Mammary epithelial cell (primary cell): ENCODE measurements at regions of chr13 and their contacts with region 1.

Region 1: GRCh38 chr13:76687467-76687866 is 198.7 kb downstream of the KCTD12 start:
- DNase-seq: no peak
- H3K4me3 ChIP-seq: no peak overlapping the region
- H3K27ac ChIP-seq: no peak overlapping the region
- H3K4me1 ChIP-seq: no peaks in the 10 kb centered on the region
- H3K27me3 ChIP-seq: no peaks in the 10 kb centered on the region
- CTCF ChIP-seq: no peak

Region 2: DNA sequence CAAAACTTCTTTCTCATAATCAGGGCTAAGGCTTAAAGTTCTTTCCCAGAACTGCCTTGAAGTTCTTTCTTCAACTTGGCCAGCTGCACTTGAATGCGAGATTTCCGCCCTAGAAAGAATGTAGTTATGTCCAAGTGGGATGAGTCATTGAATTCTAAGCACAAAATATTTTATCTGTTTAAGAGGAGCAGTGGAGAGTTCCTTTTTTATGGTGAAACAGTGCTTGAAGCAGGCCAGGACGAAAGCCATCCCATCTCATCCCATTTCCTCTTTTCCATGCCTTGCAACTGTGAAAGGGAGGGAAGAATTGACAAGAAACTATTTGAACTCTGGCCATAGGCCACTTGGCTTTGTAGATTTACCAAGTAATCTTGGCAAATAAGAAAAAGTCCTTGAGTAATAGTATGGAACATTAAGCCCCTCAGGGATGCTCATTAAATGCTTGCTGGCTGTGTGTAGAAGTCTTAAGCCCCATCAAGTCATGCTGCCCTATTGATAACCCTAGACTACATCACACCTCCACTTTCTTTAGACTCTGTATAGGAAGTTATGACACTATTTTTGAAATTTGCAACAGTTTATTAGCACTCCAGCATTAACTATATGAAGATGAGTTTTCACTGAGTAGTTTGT is 24.2 kb after region 1 on chr13:
- CTCF ChIA-PET with region 1: no interaction called
- dilution Hi-C with region 1: no loop called
- in situ Hi-C with region 1: no loop called
- intact Hi-C with region 1: loop called (anchors 1 kb)
- DNase-seq: peak; percentile 47
- H3K4me3 ChIP-seq: no peak overlapping the region
- H3K27ac ChIP-seq: no peak overlapping the region
- H3K4me1 ChIP-seq: peaks cover 8% of the 10 kb centered on the region
- H3K27me3 ChIP-seq: no peaks in the 10 kb centered on the region
- CTCF ChIP-seq: no peak

Region 3: DNA sequence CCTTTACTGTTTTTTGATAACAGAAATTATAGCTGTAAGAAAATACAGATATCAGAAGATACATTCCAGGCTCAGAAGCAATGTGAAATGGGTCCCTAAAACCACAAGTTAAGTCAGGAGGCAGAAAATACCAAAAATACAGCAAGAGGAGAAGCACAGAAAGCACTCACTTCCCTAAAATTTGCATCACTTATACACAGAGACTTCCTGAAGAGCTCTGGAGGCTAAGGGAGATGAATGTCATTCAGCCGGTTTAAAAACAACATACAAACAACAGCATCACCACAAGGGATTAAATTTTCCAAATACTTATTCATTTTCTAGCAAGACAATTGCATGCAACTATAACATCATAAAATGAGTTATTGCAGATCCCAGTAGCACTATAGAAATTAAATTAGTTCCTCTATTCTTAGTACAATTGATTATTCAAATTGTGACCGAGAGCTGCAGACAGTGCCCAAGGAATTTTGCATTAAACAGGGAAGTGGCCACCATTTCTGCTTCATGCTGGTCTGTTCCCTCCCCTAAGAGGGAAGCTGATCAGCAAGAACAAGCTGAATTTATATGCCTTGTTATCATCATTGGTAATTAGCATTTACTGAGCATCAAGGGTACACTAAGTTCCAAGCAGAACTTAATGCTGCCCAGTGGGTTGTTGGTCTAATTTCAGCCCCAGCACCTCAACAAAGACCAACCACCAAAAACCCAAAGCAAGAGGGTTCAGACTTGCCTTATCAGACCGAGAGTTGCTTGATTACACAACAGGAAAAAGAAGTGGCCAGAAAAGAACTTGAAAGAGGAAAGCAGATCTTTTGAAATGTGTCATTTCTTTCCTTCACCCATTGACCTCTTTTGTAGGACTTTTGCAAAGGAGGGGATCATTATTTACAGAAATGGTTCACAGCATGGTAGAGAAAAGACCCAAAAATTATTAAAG is 58.1 kb after region 1 on chr13:
- CTCF ChIA-PET with region 1: no interaction called
- dilution Hi-C with region 1: no loop called
- in situ Hi-C with region 1: loop called in 1 of 2 experiments (anchors 10 kb)
- intact Hi-C with region 1: no loop called
- DNase-seq: no peak
- H3K4me3 ChIP-seq: no peak overlapping the region
- H3K27ac ChIP-seq: no peak overlapping the region
- H3K4me1 ChIP-seq: no peaks in the 10 kb centered on the region
- H3K27me3 ChIP-seq: no peaks in the 10 kb centered on the region
- CTCF ChIP-seq: no peak